Mammary epithelial cell (primary cell): ENCODE measurements at regions of chr1 and their contacts with region 1.

Region 1: GRCh38 chr1:201792534-201793305 is 36.2 kb upstream of the IPO9 start:
- DNase-seq: peak; percentile 71
- H3K4me3 ChIP-seq: no peak overlapping the region
- H3K27ac ChIP-seq: no peak overlapping the region
- H3K4me1 ChIP-seq: peaks cover 23% of the 10 kb centered on the region
- H3K27me3 ChIP-seq: no peaks in the 10 kb centered on the region
- CTCF ChIP-seq: peak; percentile 99

Region 2: DNA sequence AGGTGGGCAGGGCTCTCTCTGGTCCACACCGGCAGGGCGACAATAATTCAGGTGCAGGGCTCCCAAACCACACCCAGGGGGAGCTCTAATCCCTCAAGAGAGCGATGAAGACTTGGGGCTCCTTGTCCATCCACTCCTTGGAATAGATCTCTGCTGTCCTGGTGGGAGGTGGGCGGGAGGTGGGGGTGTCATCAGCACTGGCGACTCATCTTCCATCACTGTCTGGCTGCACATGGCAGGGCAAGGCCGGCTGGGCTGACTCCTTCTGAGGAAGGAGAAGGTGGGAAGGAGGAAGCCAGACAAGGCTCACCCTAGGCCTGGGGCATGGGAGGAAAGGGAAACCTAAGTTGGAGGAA is 444.5 kb before region 1 on chr1:
- CTCF ChIA-PET with region 1: no interaction called
- dilution Hi-C with region 1: no loop called
- in situ Hi-C with region 1: no loop called
- intact Hi-C with region 1: no loop called
- DNase-seq: peak; percentile 45
- H3K4me3 ChIP-seq: no peak overlapping the region
- H3K27ac ChIP-seq: no peak overlapping the region
- H3K4me1 ChIP-seq: peaks cover 20% of the 10 kb centered on the region
- H3K27me3 ChIP-seq: no peaks in the 10 kb centered on the region
- CTCF ChIP-seq: peak; percentile 72 to 84

Region 3: GRCh38 chr1:201551877-201552731 is 240.6 kb before region 1 on chr1:
- CTCF ChIA-PET with region 1: interaction called, 15 read pairs
- dilution Hi-C with region 1: no loop called
- in situ Hi-C with region 1: loop called in 1 of 2 experiments (anchors 10 kb)
- intact Hi-C with region 1: no loop called
- DNase-seq: peak; percentile 45
- H3K4me3 ChIP-seq: no peak overlapping the region
- H3K27ac ChIP-seq: no peak overlapping the region
- H3K4me1 ChIP-seq: peaks cover 6% of the 10 kb centered on the region
- H3K27me3 ChIP-seq: no peaks in the 10 kb centered on the region
- CTCF ChIP-seq: no peak

Region 4: GRCh38 chr1:201739492-201740085 is 53.1 kb before region 1 on chr1:
- CTCF ChIA-PET with region 1: no interaction called
- dilution Hi-C with region 1: no loop called
- in situ Hi-C with region 1: no loop called
- intact Hi-C with region 1: loop called (anchors 1 kb)
- DNase-seq: peak; percentile 75
- H3K4me3 ChIP-seq: peak overlapping the region; percentile 68 to 93 (median 88)
- H3K27ac ChIP-seq: peak overlapping the region; percentile 63
- H3K4me1 ChIP-seq: peaks cover 28% of the 10 kb centered on the region
- H3K27me3 ChIP-seq: no peaks in the 10 kb centered on the region
- CTCF ChIP-seq: peak in 1 of 2 donors; percentile 16

Region 5: DNA sequence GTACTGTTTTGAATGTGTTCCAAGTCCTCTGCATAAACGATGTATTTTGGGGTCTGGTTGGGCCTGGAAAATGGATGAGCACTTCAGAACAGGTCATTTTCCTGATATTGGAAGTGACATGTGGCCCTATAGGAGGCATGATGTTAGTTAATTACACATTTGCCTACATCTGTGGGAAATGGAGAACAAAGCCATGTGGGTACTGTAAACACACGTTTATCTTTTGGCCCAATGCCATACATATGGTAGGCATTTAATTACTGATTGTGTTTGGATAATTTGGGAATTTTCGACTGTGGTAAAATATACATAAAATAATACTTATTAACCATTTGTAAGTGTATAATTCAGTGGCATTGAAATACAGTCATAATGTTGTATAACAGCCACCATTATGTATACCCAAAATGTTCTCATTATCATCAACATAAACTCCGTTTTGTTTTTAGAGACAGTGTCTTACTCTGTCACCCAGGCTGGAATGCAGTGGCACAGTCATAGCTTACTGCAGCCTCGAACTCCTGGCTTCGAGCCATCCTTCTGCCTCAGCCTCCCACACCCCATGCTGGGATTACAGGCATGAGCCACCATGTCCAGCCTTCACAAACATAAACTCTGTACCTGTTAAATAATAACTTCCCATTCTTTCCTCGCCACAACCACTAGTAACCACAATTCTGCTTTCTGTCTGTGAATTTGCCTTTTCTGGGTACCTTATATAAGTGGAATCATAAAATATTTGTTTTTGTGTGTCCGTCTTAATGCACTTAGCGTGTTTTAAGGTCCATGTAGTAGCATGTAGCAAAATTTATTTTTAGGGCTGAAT is 177.8 kb after region 1 on chr1:
- CTCF ChIA-PET with region 1: no interaction called
- dilution Hi-C with region 1: no loop called
- in situ Hi-C with region 1: no loop called
- intact Hi-C with region 1: no loop called
- DNase-seq: no peak
- H3K4me3 ChIP-seq: no peak overlapping the region
- H3K27ac ChIP-seq: no peak overlapping the region
- H3K4me1 ChIP-seq: peaks cover 7% of the 10 kb centered on the region
- H3K27me3 ChIP-seq: no peaks in the 10 kb centered on the region
- CTCF ChIP-seq: no peak